Cardiac septum (tissue), 1 donor: ENCODE measurements at regions of chr12 and their contacts with region 1.

Region 1: GRCh38 chr12:15767301-15767700 is 21.9 kb downstream of the EPS8 start:
- DNase-seq: no peak

Region 2: GRCh38 chr12:15706052-15706676 is 61.1 kb before region 1 on chr12:
- intact Hi-C with region 1: loop called (anchors 5 kb)
- DNase-seq: no peak